HCT116 (cell line): ENCODE measurements at regions of chr11 and their contacts with region 1.

Region 1: DNA sequence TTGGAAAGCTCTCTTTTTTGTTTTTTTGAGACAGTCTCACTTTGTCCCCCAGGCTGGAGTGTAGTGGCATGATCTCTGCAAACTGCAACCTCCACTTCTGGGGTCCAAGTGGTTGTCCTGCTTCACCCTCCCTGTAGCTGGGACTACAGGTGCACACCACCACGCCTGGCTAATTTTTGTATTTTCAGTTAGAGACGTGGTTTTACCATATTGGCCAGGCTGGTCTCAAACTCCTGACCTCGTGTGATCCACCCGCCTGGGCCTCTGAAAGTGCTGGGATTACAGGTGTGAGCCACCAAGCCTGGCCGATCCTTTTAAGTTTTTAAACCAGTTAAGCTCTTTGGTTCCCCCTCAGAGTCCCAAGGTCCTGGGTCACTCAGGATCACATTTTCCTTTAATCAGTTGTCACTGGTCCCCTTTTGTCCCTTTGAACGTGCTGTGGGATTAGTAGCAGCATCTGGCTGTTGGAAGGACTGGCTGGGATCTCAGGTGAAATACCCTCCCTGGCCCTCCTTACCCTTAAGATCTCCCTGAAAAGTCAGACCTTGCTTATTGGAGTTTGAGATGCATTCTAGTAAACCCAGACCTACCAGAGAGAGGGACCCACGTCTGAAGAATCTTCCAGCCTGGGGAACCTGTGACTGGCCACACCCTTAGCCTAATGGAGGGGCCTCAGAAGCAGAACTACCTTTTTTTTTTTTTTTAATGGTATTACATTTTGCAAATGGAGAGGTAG is 8.1 kb downstream of the MALAT1 start:
- DNase-seq: peak; percentile 91
- ATAC-seq: peak; percentile 60
- H3K4me3 ChIP-seq: peak overlapping the region; percentile 7 to 17; a peak in 1 of 4 replicates
- H3K27ac ChIP-seq: peak overlapping the region; percentile 83
- H3K4me1 ChIP-seq: peaks cover 50 to 80% of the 10 kb centered on the region in 2 experiments
- H3K27me3 ChIP-seq: no peaks in the 10 kb centered on the region
- CTCF ChIP-seq: no peak
- POLR2A ChIP-seq: peak; percentile 54
- RAD21 ChIP-seq: no peak

Region 2: DNA sequence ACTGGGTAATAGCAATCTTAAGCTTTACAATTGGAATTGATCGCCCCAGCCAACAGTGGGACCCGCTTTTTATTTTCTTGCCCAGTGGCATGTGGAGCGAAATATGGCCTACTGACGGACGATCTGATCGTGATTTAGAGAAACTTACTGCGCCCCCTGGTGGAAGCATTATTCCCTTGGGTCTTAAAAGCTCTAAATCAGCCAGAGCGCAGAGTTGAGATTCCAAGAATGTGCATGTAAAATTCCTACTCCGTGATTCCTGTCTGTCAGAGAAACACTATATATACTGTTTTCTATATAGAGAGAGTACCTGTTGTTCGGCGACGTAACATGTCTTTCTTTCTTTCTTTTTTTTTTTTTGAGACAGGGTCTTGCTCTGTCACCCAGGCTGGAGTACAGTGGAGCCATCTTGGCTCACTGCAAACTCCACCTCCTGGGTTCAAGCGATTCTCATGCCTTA is 177.0 kb before region 1 on chr11:
- CTCF ChIA-PET with region 1: interaction called, 4 read pairs
- POLR2A ChIA-PET with region 1: interaction called, 10 read pairs
- RAD21 ChIA-PET with region 1: no interaction called
- intact Hi-C with region 1: no loop called
- DNase-seq: peak; percentile 93
- ATAC-seq: peak; percentile 57
- H3K4me3 ChIP-seq: 0 out of 4 replicates have a peak overlapping the region, but pooled peaks of 1 of the 2 experiments have one; percentile 6
- H3K27ac ChIP-seq: no peak overlapping the region
- H3K4me1 ChIP-seq: peaks cover 9 to 23% of the 10 kb centered on the region in 2 experiments
- H3K27me3 ChIP-seq: no peaks in the 10 kb centered on the region
- CTCF ChIP-seq: peak; percentile 76 to 89 (median 86)
- POLR2A ChIP-seq: peak; percentile 15
- RAD21 ChIP-seq: peak; percentile 80

Region 3: DNA sequence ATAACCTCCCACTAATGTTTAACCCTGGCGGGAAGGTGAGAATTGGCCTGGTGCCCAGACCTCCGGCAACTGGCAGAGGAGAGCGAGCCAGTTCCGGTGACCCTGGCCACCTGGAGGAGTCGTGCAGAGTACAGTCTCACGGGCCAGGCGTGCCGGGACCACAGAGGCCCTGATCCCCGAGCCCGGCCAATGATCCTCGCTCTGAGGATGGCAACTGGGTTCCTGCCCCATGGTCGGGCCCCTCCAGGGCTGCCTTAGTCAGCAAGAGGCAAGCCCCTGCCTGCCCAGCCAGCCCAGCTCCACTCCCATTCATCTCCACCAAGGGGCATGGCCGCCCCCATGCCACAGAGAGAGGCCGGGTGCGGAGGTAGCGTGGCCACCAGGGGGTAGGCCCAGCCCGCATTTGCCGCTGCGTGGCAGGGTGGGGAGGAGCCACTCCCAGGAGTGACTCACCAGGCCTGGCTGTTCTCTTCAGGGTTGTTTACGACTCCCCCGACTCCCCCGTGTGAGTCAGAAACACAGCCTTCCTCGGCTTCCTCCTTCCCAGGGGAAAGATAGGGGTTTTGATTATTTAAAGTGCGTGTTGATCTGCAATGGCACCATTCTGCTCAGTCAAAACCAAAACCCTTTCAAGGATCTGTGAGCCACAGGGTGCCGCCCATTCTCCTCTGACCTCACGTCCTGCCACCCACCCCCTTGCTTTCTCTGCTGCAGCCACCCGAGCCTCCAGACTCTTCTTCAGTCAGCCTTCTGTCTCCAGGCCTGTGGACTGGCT is 124.7 kb before region 1 on chr11 and contains the start of gene SLC25A45:
- CTCF ChIA-PET with region 1: interaction called, 8 read pairs
- POLR2A ChIA-PET with region 1: interaction called, 11 read pairs
- RAD21 ChIA-PET with region 1: no interaction called
- intact Hi-C with region 1: loop called (anchors 5 kb)
- DNase-seq: peak; percentile 92
- ATAC-seq: peak; percentile 83
- H3K4me3 ChIP-seq: peak within 1 kb of the TSS; percentile 46 to 55
- H3K27ac ChIP-seq: peak within 1 kb of the TSS; percentile 99
- H3K4me1 ChIP-seq: peaks cover 55 to 69% of the 10 kb centered on the region in 2 experiments
- H3K27me3 ChIP-seq: no peaks in the 10 kb centered on the region
- CTCF ChIP-seq: peak in 2 of 3 experiments; percentile 63 to 75; a peak in 4 of 6 replicates
- POLR2A ChIP-seq: no peak
- RAD21 ChIP-seq: no peak
- total RNA-seq, gene SLC25A45: 3.9 TPM

Region 4: GRCh38 chr11:65448418-65449105 is 58.4 kb before region 1 on chr11:
- CTCF ChIA-PET with region 1: interaction called, 4 read pairs
- POLR2A ChIA-PET with region 1: interaction called, 18 read pairs
- RAD21 ChIA-PET with region 1: no interaction called
- intact Hi-C with region 1: no loop called
- DNase-seq: no peak
- ATAC-seq: peak; percentile 43; the same call in 1 of the 2 replicates
- H3K4me3 ChIP-seq: no peak overlapping the region
- H3K27ac ChIP-seq: no peak overlapping the region
- H3K4me1 ChIP-seq: peaks cover 11 to 21% of the 10 kb centered on the region in 2 experiments; a peak in 3 of 4 replicates
- H3K27me3 ChIP-seq: no peaks in the 10 kb centered on the region
- CTCF ChIP-seq: no peak
- POLR2A ChIP-seq: no peak
- RAD21 ChIP-seq: no peak

Region 5: GRCh38 chr11:65471410-65471762 is 35.6 kb before region 1 on chr11:
- CTCF ChIA-PET with region 1: interaction called, 31 read pairs
- POLR2A ChIA-PET with region 1: interaction called, 1,499 read pairs
- RAD21 ChIA-PET with region 1: interaction called, 5 to 14 read pairs
- intact Hi-C with region 1: loop called (anchors 2 kb)
- DNase-seq: no peak
- ATAC-seq: peak; percentile 73
- H3K4me3 ChIP-seq: peak overlapping the region in 1 of 2 experiments; percentile 31; a peak in 2 of 4 replicates
- H3K27ac ChIP-seq: peak overlapping the region; percentile 97
- H3K4me1 ChIP-seq: peaks cover 65 to 81% of the 10 kb centered on the region in 2 experiments
- H3K27me3 ChIP-seq: no peaks in the 10 kb centered on the region
- CTCF ChIP-seq: peak in 2 of 3 experiments; percentile 64 to 69; a peak in 4 of 6 replicates
- POLR2A ChIP-seq: no peak
- RAD21 ChIP-seq: no peak

Region 6: GRCh38 chr11:65540297-65541092 is 33.6 kb after region 1 on chr11:
- CTCF ChIA-PET with region 1: no interaction called
- POLR2A ChIA-PET with region 1: interaction called, 16 read pairs
- RAD21 ChIA-PET with region 1: interaction called in 1 of 2 experiments, 3 read pairs
- intact Hi-C with region 1: no loop called
- DNase-seq: peak; percentile 64
- ATAC-seq: peak; percentile 73
- H3K4me3 ChIP-seq: peak overlapping the region; percentile 68 to 85
- H3K27ac ChIP-seq: peak overlapping the region; percentile 100
- H3K4me1 ChIP-seq: peaks cover 13 to 39% of the 10 kb centered on the region in 2 experiments; a peak in 3 of 4 replicates
- H3K27me3 ChIP-seq: no peaks in the 10 kb centered on the region
- CTCF ChIP-seq: peak in 2 of 3 experiments; percentile 82 to 85; a peak in 4 of 6 replicates
- POLR2A ChIP-seq: no peak
- RAD21 ChIP-seq: no peak

Region 7: DNA sequence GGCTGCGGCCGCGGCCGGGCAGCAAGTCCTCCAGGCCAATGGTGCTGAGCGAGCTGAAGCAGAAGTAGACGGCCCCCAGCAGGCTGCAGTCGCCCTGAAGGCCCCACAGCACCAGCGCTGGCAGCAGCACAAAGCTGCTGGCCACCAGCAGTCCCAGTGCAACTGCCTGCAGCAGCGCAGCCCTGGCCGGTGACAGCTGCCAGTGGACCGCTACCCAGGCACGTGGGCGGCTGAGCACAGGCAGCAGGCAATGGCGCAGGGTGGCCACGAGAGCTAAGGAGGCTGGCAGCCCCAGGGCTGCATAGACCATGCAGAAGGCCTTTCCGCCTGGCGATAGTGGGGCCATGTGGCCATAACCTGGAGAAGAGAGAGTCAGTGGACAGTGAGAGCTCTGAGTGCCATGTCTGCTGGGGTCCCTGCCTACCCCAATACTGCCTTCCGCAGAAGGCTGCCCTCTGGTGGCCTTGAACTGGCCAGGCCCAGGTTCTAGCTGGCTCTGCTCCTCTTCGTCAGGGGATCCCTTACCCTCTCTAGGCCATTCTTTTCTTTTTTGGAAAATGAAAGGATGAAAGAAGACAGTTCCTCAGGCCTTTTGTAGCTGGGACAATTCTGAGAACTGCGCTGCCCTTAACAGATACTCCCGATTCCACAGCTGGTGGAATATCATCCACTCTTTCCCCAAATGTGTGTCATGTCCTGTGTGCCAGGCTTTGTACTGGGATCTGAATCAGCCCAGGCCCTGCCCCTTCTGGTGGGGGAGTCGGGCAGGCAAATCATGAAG is 86.8 kb after region 1 on chr11:
- CTCF ChIA-PET with region 1: no interaction called
- POLR2A ChIA-PET with region 1: no interaction called
- RAD21 ChIA-PET with region 1: no interaction called
- intact Hi-C with region 1: no loop called
- DNase-seq: no peak
- ATAC-seq: peak; percentile 72
- H3K4me3 ChIP-seq: no peak overlapping the region
- H3K27ac ChIP-seq: peak overlapping the region; percentile 26; the same call in 1 of the 2 replicates
- H3K4me1 ChIP-seq: peaks cover 13 to 21% of the 10 kb centered on the region in 2 experiments
- H3K27me3 ChIP-seq: no peaks in the 10 kb centered on the region
- CTCF ChIP-seq: peak; percentile 52 to 86 (median 83); a peak in 5 of 6 replicates
- POLR2A ChIP-seq: no peak
- RAD21 ChIP-seq: peak; percentile 53